Esophagus muscularis mucosa (tissue), 4 donors: ENCODE measurements at regions of chr5 and their contacts with region 1.

Region 1: DNA sequence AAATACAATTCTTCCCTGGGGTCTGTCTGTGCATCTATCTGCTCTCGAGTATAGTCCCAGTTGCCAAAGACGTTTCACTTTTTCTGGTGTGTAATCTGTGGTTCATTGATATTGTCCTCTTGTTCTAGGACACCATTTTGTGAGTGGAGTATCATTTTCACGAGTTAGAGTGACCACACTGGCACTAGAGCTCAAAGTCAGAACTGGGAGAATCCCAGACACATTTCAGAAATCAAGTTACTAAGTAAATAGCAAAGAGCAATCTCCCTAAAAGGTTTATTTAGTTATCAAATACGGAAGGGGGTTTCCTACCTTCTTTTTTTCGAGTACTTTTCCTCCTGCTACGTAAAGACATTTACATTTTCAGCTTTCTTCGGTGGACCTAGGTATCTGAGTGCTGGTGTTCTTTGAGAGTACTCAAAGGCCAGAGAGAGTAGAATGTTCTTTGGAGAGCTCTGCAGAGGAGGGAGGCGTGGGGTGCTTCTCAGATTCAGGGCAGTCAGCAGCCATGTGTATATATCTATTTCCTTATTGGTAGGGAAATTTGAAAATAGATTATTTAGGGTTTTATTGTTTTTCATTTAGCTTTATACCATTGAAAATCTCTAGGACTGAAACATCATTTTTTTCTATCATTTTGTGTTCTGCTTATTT is 8.9 kb upstream of the HSPA9 start:
- DNase-seq: no peak
- H3K4me3 ChIP-seq: no peak overlapping the region
- H3K27ac ChIP-seq: no peak overlapping the region
- H3K4me1 ChIP-seq: peaks cover 0 to 4% (median 0%) of the 10 kb centered on the region in 4 donors
- H3K27me3 ChIP-seq: no peaks in the 10 kb centered on the region
- CTCF ChIP-seq: no peak
- EP300 ChIP-seq: no peak
- POLR2A ChIP-seq: no peak

Region 2: GRCh38 chr5:138752951-138753793 is 169.1 kb after region 1 on chr5 and contains the start of gene CTNNA1:
- intact Hi-C with region 1: loop called (anchors 5 kb)
- DNase-seq: peak; percentile 94
- H3K4me3 ChIP-seq: peak within 1 kb of the TSS; percentile 74 to 99 (median 96)
- H3K27ac ChIP-seq: peak within 1 kb of the TSS; percentile 99 to 100 (median 100)
- H3K4me1 ChIP-seq: peaks cover 35 to 48% (median 40%) of the 10 kb centered on the region in 4 donors
- H3K27me3 ChIP-seq: no peaks in the 10 kb centered on the region
- CTCF ChIP-seq: no peak
- EP300 ChIP-seq: no peak
- POLR2A ChIP-seq: no peak
- total RNA-seq, gene CTNNA1: 335 to 423 (median 369) TPM